MCF 10A (cell line): ENCODE measurements at regions of chr3 and their contacts with region 1.

Region 1: DNA sequence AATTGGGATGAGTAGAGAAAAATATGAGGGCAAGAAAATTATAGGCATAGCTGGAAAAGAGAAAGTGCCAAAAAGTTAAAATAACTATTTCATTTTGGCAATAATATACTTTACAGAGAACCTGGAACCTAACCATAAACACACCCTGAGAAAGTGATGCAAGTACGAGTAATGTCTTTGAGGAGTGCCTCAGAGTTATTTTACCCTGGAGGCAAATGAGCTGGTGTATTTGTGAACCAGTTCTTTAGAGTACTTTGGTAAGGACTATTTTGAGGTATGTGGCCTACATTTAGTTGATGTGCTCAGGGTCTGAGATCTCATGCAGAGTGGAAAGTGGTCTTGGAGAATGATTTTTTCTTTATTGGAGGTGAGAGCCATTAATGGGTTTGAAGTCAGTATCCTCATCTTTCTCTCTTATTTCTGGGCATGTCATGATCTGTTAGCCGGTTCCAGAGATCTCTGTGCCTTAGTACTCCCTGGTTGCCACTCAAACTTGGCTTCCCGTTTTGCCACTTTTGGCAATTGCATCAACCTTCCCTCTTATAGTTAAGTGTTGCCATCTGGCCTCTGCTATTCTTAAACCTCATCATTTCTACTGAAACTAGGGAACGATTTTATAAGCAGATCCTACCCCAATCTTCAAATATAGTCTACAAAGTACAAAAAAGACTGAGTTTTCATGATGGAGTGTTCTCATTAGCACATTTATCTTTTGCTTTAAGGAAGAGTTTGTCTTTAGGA is 145.7 kb downstream of the EPHA6 start:
- DNase-seq: peak; percentile 90
- H3K4me3 Mint-ChIP-seq: peak overlapping the region; percentile 56
- H3K27ac Mint-ChIP-seq: peak overlapping the region; percentile 93
- H3K4me1 Mint-ChIP-seq: peaks cover 29% of the 10 kb centered on the region
- H3K27me3 Mint-ChIP-seq: no peaks in the 10 kb centered on the region
- CTCF ChIP-seq: no peak

Region 2: GRCh38 chr3:96970198-96970597 is 10.1 kb after region 1 on chr3:
- CTCF ChIA-PET with region 1: interaction called, 4 read pairs
- POLR2A ChIA-PET with region 1: interaction called, 10 read pairs
- intact Hi-C with region 1: no loop called
- DNase-seq: peak; percentile 31
- H3K4me3 Mint-ChIP-seq: no peak overlapping the region
- H3K27ac Mint-ChIP-seq: peak overlapping the region; percentile 80
- H3K4me1 Mint-ChIP-seq: peaks cover 26% of the 10 kb centered on the region
- H3K27me3 Mint-ChIP-seq: no peaks in the 10 kb centered on the region
- CTCF ChIP-seq: no peak

Region 3: GRCh38 chr3:97010881-97011664 is 51.0 kb after region 1 on chr3:
- CTCF ChIA-PET with region 1: no interaction called
- POLR2A ChIA-PET with region 1: no interaction called
- intact Hi-C with region 1: loop called (anchors 5 kb)
- DNase-seq: no peak
- H3K4me3 Mint-ChIP-seq: no peak overlapping the region
- H3K27ac Mint-ChIP-seq: no peak overlapping the region
- H3K4me1 Mint-ChIP-seq: no peaks in the 10 kb centered on the region
- H3K27me3 Mint-ChIP-seq: no peaks in the 10 kb centered on the region
- CTCF ChIP-seq: no peak

Region 4: DNA sequence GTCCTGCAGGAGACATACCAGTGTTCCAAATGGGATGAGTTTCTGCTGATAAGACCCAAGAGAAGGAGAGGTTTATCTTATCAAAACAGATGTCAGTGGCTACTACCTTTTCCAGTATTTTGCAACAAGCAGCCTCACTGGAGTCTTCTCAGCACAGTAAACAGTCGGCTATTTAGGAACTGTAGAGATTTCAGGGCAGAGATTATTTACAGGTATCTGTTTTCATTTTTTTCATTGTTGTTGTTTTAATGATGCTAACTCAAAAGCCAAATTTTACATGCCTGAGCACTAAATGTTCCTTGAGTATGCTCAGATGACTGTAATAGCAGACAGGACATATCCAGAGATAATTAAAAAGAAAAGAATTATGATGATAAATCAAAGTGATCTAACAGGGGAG is 106.5 kb after region 1 on chr3:
- CTCF ChIA-PET with region 1: no interaction called
- POLR2A ChIA-PET with region 1: no interaction called
- intact Hi-C with region 1: no loop called
- DNase-seq: no peak
- H3K4me3 Mint-ChIP-seq: no peak overlapping the region
- H3K27ac Mint-ChIP-seq: no peak overlapping the region
- H3K4me1 Mint-ChIP-seq: no peaks in the 10 kb centered on the region
- H3K27me3 Mint-ChIP-seq: no peaks in the 10 kb centered on the region
- CTCF ChIP-seq: no peak